Testis (tissue), 5 donors: ENCODE measurements at regions of chr15 and their contacts with region 1.

Region 1: GRCh38 chr15:79028411-79028964 is 62.1 kb downstream of the RASGRF1 start:
- DNase-seq: peak; percentile 70
- H3K4me3 ChIP-seq: no peak overlapping the region
- H3K27ac ChIP-seq: no peak overlapping the region
- H3K4me1 ChIP-seq: no peaks in the 10 kb centered on the region
- H3K27me3 ChIP-seq: no peaks in the 10 kb centered on the region
- CTCF ChIP-seq: peak; percentile 80 to 89 (median 84)
- POLR2A ChIP-seq: no peak

Region 2: GRCh38 chr15:78685159-78685921 is 343.1 kb before region 1 on chr15:
- intact Hi-C with region 1: no loop called
- DNase-seq: no peak
- H3K4me3 ChIP-seq: no peak overlapping the region
- H3K27ac ChIP-seq: no peak overlapping the region
- H3K4me1 ChIP-seq: no peaks in the 10 kb centered on the region
- H3K27me3 ChIP-seq: no peaks in the 10 kb centered on the region
- CTCF ChIP-seq: no peak
- POLR2A ChIP-seq: no peak

Region 3: DNA sequence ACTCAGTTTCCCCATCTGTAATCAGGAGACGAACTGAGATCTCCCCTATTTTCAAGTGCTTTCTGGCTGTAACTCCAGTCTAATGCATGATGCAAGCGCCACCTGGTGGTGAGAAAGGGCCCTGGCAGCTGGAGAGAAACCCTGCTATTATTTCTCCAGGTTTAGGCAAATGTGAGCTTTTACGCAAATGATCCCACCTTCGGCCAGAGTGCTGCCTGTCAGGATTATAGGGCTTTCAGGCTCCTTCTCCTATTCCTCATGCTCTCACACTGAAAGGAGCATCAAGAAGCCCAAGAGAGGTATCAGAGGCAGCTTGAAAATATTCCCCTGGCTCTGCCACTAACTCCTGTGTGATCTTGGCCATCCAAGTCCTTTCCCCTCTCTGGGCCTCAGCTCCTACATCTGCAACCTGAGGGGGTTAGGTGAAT is 156.0 kb after region 1 on chr15:
- intact Hi-C with region 1: loop called (anchors 5 kb)
- DNase-seq: peak; percentile 92
- H3K4me3 ChIP-seq: no peak overlapping the region
- H3K27ac ChIP-seq: no peak overlapping the region
- H3K4me1 ChIP-seq: no peaks in the 10 kb centered on the region
- H3K27me3 ChIP-seq: no peaks in the 10 kb centered on the region
- CTCF ChIP-seq: peak; percentile 95 to 99 (median 97)
- POLR2A ChIP-seq: no peak